Left lung (tissue), 14 donors: ENCODE measurements at regions of chr20 and their contacts with region 1.

Region 1: DNA sequence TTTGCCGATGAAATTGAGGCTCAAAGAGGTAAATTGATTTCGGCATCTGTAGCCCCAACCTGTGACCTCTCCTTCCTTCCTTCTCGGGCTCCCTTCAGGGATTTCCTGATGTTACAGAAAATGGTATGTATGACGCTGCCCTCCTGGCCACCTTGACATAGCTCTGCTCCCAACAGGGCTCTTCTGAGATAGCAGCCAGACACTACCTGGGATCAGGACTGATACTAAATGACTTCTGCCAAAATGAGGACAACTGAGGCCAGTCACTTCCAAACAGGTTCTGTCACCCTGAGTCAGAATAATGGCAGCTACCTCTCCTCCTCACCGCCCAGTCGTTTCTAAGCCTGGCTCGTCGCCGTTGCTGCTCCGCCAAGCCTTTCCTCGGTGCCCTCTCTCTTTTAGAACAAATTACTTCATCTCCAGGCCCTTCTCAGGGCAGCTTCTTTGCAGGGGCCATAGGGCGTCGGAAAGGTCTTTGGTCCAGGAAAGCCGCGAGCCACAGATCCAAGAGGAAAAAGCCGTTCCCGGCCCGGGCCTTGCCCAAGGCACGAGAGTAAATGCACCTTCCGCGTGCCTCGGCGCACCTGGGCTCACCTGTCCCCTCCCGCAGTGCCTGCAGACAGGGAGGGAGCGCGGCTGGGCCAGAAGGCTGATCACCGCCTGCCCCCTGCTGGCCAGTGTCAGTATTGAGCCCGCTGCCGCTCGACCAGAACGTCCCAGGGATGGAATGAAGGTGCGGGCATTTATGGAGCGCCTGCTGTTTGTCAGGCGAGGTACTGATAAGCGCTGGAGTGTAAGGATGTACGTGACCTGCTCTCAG is 904 bp upstream of the LPIN3 start:
- DNase-seq: peak; percentile 68 to 96 (median 86)
- ATAC-seq: peak; percentile 95
- H3K4me3 ChIP-seq: peak overlapping the region; percentile 33 to 36
- H3K27ac ChIP-seq: peak overlapping the region; percentile 24 to 80
- H3K4me1 ChIP-seq: peaks cover 0 to 14% of the 10 kb centered on the region in 2 donors
- H3K27me3 ChIP-seq: peaks cover 0 to 11% of the 10 kb centered on the region in 2 donors
- CTCF ChIP-seq: peak; percentile 98 to 99

Region 2: GRCh38 chr20:41249406-41250281 is 90.1 kb before region 1 on chr20:
- intact Hi-C with region 1: loop called in 1 of 2 experiments (anchors 10 kb)
- DNase-seq: peak in 2 of 4 donors; percentile 36 to 53
- ATAC-seq: peak; percentile 78
- H3K4me3 ChIP-seq: no peak overlapping the region
- H3K27ac ChIP-seq: peak overlapping the region; percentile 76
- H3K4me1 ChIP-seq: peaks cover 29 to 34% of the 10 kb centered on the region in 2 donors
- H3K27me3 ChIP-seq: no peaks in the 10 kb centered on the region
- CTCF ChIP-seq: peak in 1 of 2 donors; percentile 20

Region 3: DNA sequence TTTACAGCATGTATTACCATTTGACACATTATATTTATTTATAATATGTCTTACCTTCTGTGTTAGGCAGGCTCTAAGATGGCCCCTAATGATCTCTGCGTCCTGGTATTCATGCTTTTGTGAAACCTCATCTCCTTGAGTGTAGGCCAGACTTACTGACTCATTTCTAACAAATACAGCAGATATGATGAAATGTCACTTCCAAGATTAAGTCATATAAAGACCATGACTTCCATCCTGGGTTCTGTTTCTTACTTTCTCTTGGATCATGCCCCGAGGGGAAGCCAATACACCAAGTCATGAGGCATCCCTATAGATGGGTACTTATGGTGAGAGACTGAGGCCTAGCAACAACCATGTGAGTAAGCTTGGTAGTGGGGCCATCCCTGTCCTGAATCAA is 52.4 kb before region 1 on chr20:
- intact Hi-C with region 1: no loop called
- DNase-seq: no peak
- ATAC-seq: no peak
- H3K4me3 ChIP-seq: no peak overlapping the region
- H3K27ac ChIP-seq: no peak overlapping the region
- H3K4me1 ChIP-seq: peaks cover 0 to 3% of the 10 kb centered on the region in 2 donors
- H3K27me3 ChIP-seq: no peaks in the 10 kb centered on the region
- CTCF ChIP-seq: no peak